ENCODE measurements at regions of chrX and their contacts with region 1.

Region 1: DNA sequence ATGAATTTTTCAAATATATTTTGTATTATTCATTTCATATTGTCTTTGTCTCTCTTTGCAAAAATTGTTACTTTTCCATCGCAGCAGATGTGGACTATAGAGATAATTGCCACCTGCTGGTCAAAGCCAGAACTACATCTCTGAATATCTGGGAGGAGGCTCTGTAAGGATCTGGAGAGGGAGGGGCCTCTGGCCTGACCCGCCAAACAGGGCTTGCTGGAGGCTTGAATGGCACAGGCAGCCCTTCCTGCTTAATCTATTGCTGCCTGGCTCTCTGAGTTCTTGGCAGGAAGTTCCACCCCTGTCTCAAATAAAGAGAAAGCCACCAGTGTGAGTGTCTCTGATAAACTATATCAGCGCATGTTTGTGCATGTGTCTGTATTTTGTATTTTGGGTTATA is 132.4 kb downstream of the ZMAT1 start:
- DNase-seq: peak; percentile 68 to 81 (median 70)
- ATAC-seq: peak; percentile 98
- H3K4me3 ChIP-seq: no peak overlapping the region
- H3K27ac ChIP-seq: no peak overlapping the region
- H3K4me1 ChIP-seq: no peaks in the 10 kb centered on the region
- H3K27me3 ChIP-seq: no peaks in the 10 kb centered on the region
- CTCF ChIP-seq: peak; percentile 48 to 68 (median 64)
- EP300 ChIP-seq: no peak
- POLR2A ChIP-seq: no peak
- RAD21 ChIP-seq: peak; percentile 50 to 63

Region 2: DNA sequence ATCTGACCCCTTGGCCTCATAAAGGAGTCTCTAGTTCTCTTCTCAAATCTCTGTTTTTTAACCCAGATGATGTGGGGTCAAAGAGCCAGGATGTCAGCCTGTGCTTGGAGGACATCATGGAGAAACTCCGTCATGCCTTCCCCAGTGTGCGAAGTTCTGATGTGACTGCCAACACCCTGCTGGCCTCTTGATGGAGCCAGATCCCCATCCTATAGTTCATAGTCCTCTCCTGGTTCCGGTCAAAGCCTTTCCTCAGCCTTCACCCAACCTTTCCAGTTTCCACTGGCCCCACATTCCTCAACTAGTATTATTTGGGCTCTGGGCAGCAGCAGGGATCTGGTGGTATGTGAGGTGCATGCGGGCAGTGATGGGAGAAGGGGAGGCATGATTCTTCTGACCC is 539.0 kb before region 1 on chrX:
- CTCF ChIA-PET with region 1: no interaction called
- POLR2A ChIA-PET with region 1: no interaction called
- in situ Hi-C with region 1: loop called (anchors 25 kb)
- intact Hi-C with region 1: loop called (anchors 1 kb)
- DNase-seq: peak; percentile 42 to 46 (median 46)
- ATAC-seq: peak; percentile 95
- H3K4me3 ChIP-seq: no peak overlapping the region
- H3K27ac ChIP-seq: no peak overlapping the region
- H3K4me1 ChIP-seq: no peaks in the 10 kb centered on the region
- H3K27me3 ChIP-seq: no peaks in the 10 kb centered on the region; a peak in 1 of 5 replicates
- CTCF ChIP-seq: peak; percentile 50 to 73 (median 71)
- EP300 ChIP-seq: no peak
- POLR2A ChIP-seq: no peak
- RAD21 ChIP-seq: peak; percentile 50 to 73

Region 3: DNA sequence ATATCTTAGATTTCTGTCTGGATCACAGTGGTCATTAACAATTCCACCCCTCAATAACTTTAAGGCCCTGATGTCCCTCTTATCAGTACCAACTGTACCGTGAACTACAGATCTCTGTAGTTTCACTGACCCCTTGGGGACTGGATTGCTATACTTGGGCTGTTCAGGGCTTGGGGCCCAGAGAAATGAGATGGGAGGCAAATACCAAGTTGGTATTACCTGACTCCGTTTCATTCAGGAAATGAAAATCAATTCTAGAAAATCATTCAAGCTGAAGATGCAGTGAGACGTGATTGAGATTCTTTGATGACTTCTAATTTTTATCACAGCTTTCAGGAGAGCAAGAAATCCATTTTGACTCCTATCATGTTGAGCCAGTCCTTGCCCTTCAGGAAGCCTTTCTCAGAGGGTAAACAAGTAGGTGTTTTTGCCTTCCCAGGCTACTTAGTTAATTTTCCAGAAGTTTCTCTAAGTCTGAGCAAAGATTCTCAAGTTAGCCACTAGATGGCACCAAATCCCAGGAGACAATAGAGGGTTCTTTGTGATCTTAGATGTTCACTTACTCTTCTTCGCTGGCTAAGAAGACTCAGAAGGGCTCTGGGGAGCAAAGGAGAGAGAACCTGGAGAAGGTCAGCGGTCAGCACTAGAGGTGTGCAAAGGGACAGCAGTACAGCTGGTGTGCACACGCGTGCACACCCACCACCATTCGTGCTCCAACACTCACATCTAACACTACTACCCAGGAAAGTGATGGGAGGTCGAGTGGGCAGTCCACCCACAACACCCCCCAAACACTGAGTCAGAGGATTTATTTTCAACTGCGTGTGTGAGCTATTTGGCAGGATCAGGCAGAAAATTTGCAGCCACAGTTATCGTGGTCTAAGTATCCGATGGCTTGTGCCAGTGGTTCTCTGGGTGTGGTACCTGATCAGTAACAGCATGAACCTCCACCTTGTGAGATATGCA is 383.9 kb before region 1 on chrX:
- CTCF ChIA-PET with region 1: interaction called, 3 read pairs
- POLR2A ChIA-PET with region 1: no interaction called
- in situ Hi-C with region 1: no loop called
- intact Hi-C with region 1: loop called (anchors 2 kb)
- DNase-seq: peak; percentile 49 to 72 (median 52)
- ATAC-seq: peak; percentile 84
- H3K4me3 ChIP-seq: no peak overlapping the region
- H3K27ac ChIP-seq: no peak overlapping the region
- H3K4me1 ChIP-seq: peaks cover 8 to 17% of the 10 kb centered on the region in 2 experiments; a peak in 4 of 5 replicates
- H3K27me3 ChIP-seq: no peaks in the 10 kb centered on the region; a peak in 1 of 5 replicates
- CTCF ChIP-seq: peak; percentile 52 to 75 (median 66)
- EP300 ChIP-seq: no peak
- POLR2A ChIP-seq: no peak
- RAD21 ChIP-seq: peak; percentile 53 to 74

Region 4: DNA sequence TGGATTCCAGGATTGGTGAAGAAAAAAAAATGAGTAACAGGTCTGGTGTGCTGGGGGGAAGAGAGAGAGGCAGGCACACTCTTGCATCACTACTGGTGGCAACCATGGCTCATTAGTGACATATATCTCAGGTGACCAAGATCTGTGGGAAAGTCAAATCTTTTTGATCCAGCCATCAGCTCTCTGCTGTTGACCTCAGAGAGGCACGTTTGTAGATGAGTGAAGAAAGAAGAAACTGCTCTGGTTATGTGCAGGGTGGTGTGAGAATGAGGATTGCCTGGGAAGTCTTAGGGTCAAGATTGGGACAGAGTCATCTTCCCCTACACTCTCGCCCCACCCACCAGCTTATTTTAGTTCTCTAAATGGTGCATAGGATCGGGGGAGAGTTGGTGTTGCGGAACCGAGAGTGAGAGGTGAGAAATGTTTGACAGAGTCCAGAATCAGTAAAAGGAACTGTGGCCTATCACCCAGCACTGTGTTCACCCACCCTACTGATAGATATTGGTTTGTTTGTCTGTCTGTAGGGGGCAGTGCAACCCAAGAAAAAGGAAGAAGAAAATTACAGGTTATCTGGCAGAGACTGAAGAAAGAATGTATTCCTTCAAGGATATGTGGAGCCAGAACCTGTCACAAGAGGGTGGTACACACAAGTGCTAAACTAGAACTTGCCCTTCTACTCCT is 203.5 kb before region 1 on chrX:
- CTCF ChIA-PET with region 1: interaction called, 3 read pairs
- POLR2A ChIA-PET with region 1: no interaction called
- in situ Hi-C with region 1: no loop called
- intact Hi-C with region 1: loop called (anchors 5 kb)
- DNase-seq: peak; percentile 18 to 68 (median 32)
- ATAC-seq: peak; percentile 87
- H3K4me3 ChIP-seq: no peak overlapping the region
- H3K27ac ChIP-seq: no peak overlapping the region
- H3K4me1 ChIP-seq: no peaks in the 10 kb centered on the region
- H3K27me3 ChIP-seq: no peaks in the 10 kb centered on the region
- CTCF ChIP-seq: peak; percentile 47 to 77 (median 58); a peak in 5 of 6 replicates
- EP300 ChIP-seq: no peak
- POLR2A ChIP-seq: no peak
- RAD21 ChIP-seq: peak; percentile 66 to 82

Region 5: DNA sequence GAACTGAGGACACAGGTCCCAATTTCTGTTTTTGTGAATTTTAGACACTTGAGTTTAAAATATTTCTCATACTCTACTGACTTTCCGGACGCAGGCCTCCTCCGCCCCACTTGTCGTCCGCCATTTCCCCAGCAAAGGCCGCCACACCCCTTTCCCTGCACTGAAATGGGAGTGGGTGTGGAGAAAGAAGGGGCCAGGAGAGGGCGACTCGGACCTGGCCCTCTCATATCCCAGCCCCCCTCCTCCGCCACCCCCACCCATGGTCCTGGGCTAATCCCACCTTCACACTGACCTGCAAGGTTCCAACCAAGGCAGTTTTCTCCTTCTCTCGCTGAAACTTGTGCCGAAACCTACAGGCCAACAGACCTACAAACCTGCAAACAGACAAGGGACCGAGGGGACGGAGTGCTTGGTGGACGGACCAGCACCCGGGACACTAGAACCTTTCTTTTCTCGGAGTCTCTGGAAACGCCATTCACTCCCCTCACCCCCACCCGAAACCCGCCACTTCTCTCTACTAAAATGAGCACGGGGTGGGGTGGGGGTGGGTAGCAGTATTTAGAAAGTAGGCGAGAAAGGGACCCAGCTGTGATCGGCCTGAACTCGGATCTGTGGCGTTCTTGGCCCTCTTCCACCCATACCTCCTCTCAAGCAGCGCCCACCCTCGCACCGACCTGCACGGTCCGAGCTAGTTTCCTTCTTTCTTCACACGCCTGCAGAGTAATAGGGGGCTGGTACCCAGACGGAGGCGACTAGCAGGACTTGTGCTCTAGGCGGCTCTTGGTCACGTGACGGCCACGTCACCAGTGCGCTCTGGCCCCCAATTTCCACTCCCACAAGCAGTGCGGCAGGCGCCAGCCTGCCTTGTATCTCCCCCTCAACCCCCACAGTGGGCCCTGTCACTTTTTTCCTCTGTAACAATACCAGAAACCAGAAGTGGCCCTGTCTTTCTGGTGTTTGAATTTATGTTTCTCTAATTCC is 181.9 kb before region 1 on chrX and contains the start of gene ARMCX6:
- CTCF ChIA-PET with region 1: no interaction called
- POLR2A ChIA-PET with region 1: no interaction called
- in situ Hi-C with region 1: no loop called
- intact Hi-C with region 1: loop called (anchors 5 kb)
- DNase-seq: peak; percentile 61 to 84 (median 69)
- ATAC-seq: peak; percentile 91
- H3K4me3 ChIP-seq: peak within 1 kb of the TSS; percentile 58
- H3K27ac ChIP-seq: peak within 1 kb of the TSS; percentile 66
- H3K4me1 ChIP-seq: peaks cover 6% of the 10 kb centered on the region in 2 experiments; a peak in 4 of 5 replicates
- H3K27me3 ChIP-seq: no peaks in the 10 kb centered on the region
- CTCF ChIP-seq: peak in 2 of 3 experiments; percentile 49 to 55; a peak in 4 of 6 replicates
- EP300 ChIP-seq: no peak
- POLR2A ChIP-seq: peak; percentile 57
- RAD21 ChIP-seq: peak; percentile 23 to 45; a peak in 3 of 4 replicates
- polyA plus RNA-seq, gene ARMCX6: 39.6 to 41.2 TPM

Region 6: GRCh38 chrX:101958133-101958532 is 158.7 kb after region 1 on chrX:
- CTCF ChIA-PET with region 1: no interaction called
- POLR2A ChIA-PET with region 1: no interaction called
- in situ Hi-C with region 1: no loop called
- intact Hi-C with region 1: no loop called
- DNase-seq: no peak
- ATAC-seq: no peak
- H3K4me3 ChIP-seq: no peak overlapping the region
- H3K27ac ChIP-seq: no peak overlapping the region
- H3K4me1 ChIP-seq: no peaks in the 10 kb centered on the region
- H3K27me3 ChIP-seq: no peaks in the 10 kb centered on the region
- CTCF ChIP-seq: no peak
- EP300 ChIP-seq: no peak
- POLR2A ChIP-seq: no peak
- RAD21 ChIP-seq: no peak